GM13977 (cell line): ENCODE measurements at regions of chr15 and their contacts with region 1.

Region 1: GRCh38 chr15:75153087-75153486 is 48.6 kb upstream of the C15orf39 start:
- DNase-seq: peak; percentile 58
- CTCF ChIP-seq: no peak

Region 2: GRCh38 chr15:74723754-74724334 is 429.2 kb before region 1 on chr15:
- in situ Hi-C with region 1: no loop called
- DNase-seq: peak; percentile 79
- CTCF ChIP-seq: no peak

Region 3: DNA sequence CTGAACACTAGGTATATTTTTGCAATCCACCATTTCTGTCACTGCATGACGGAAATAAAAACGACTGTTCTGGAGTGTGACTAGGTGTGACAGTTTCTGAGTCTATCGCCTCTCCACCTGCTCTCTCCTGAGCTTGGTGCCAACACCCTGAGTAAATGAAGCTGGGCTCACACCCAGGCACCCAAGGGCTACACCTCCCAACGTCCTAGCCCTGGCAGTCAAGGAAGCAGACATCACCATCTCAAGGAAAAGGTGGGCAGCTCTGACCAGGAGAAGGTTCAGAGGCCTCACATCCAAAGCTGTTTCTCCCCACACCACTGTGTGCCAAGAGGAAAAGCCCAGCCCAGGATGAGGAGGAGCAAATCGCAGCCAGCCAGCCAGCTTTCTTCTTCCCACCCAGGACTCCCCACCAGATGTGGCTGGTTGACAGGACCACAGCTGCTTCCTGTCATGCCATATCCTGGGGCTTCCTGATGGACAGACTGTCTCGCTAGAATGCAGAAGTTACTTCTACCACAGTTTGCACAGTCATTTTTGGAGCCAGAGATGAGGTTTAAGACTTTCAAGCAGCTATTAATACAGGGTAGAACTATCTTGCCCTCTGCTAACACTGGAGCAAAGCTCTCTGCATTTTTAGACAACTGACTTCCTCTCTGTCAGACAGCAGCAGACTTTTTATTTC is 283.2 kb before region 1 on chr15:
- in situ Hi-C with region 1: no loop called
- DNase-seq: peak; percentile 78
- CTCF ChIP-seq: no peak

Region 4: DNA sequence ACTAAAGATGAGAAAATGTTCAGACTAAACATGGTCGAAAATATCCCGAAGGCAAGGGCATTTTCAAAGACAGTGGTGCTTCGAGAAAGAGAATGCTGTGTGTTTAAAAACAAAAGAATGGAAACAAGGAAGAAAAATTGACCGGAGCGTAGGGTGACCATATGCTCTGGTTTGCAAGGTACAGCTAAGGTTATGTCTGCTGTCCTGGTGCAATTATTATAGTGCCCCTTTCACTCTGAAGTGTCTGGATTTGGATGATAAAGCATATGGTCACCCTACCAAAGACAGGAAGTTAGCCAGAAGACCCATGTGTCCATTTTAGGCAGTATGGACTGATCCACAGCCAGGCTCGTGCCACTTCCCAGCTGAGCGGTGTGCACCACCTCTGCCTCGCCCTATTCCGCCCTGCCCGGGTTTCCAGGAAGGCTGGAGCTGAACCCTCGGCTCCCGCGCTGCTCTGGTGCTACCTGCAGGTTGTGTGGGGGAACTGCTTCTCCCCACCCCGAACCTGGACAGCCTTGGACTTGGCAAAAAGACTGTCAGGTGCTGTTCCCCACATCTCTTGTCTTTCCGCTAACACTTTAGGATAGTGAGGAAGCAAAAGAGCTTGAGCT is 154.8 kb after region 1 on chr15:
- in situ Hi-C with region 1: loop called (anchors 25 kb)
- DNase-seq: peak; percentile 38
- CTCF ChIP-seq: peak; percentile 43

Region 5: DNA sequence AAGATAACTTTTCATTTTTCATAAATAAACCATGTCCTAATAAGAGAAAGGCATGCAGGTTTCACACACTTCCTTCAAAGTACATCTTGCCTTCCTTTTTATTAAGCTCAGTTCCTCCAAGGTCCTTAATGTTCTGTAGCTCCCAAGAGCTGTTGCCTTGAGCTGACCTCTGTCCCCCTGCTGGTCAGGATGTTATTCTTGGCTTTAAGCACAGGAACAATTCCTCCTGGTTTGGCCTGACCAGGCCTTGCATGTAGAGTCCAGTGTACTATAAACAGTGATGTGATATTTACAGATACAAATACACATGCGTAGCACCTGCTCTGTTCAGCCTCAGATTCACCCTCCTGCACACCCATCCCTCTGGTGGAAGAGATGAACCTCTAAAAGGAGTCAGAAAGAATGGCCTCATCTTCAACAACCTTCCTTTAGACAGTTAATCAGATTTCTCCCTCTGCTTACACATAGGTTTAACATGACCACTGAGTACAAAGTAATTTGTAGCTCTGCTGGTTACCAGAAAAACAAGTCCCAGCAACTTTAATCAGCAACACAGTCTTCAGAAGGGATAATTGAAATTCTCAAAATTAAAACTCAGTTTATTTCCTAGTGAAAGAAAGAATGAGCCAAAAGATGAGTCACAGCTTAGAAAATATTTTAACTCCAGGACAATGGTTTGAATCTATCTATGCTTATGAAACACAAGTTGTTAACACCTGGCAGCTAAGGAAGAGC is 379.5 kb after region 1 on chr15:
- in situ Hi-C with region 1: no loop called
- DNase-seq: no peak
- CTCF ChIP-seq: no peak

Region 6: DNA sequence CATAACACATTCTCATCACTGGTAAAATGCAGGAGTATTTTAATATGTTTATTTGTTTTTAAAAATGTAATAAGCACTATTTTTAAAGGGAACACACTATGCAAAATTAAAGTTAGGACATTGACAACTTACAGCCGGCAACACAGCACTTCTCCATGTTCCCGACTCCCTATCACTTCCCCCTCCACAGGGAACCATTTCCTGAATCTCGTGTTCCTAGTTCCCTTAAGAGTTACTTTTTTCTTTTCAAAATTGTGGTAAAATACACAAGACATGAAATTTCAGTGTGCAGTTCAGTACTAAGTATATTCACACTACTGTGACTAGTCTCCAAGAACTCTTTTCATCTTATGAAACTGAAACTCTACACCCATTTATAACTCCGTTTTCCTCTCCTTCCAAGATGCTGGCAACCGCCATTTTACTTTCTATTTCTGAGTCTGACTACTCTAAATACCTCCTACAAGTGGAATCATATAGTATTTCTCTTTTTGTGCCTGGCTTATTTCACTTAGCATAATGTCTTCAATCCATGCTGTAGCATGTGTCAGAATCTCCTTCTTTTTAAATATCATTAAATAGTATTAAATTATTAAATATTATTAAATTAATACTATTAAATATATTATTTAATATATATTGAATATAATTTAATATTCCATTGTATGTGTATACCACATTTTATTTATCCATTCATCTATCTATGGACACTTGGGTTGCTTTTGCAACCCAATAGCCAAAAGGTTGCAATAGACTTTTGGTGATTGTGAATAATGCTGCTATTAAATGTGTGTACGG is 664.2 kb after region 1 on chr15:
- in situ Hi-C with region 1: no loop called
- DNase-seq: no peak
- CTCF ChIP-seq: no peak